ENCODE measurements at regions of chr2 and their contacts with region 1.

Region 1: DNA sequence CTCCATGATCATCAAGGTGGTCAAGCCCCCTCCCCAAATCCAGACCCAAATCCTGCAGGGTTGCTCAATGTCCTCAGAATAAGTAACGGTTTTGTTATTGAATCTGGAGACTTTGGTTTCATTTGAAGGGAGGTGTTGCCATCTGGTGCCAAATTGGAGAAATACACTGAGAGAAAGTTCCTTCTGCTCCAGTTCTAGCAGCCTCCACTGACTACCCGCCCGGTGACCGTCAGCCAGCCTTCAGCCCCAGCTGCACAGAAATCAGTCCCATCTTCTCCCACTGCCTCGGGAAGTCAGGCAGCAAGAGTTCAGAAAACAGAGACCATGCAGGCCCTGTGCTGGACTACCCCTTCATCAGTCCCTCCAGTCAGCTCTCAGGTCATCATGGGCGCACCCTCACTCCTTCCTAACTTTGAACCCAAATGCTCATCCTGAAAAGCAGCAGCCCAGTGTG is 38.7 kb downstream of the PKDCC start:
- DNase-seq: peak; percentile 35
- ATAC-seq: peak; percentile 77
- H3K4me3 ChIP-seq: no peak overlapping the region
- H3K27ac ChIP-seq: no peak overlapping the region
- H3K4me1 ChIP-seq: no peaks in the 10 kb centered on the region
- H3K27me3 ChIP-seq: peaks cover 4% of the 10 kb centered on the region; the same call in 1 of the 2 replicates
- CTCF ChIP-seq: peak; percentile 44 to 80 (median 73)
- POLR2A ChIP-seq: no peak
- RAD21 ChIP-seq: peak; percentile 93

Region 2: DNA sequence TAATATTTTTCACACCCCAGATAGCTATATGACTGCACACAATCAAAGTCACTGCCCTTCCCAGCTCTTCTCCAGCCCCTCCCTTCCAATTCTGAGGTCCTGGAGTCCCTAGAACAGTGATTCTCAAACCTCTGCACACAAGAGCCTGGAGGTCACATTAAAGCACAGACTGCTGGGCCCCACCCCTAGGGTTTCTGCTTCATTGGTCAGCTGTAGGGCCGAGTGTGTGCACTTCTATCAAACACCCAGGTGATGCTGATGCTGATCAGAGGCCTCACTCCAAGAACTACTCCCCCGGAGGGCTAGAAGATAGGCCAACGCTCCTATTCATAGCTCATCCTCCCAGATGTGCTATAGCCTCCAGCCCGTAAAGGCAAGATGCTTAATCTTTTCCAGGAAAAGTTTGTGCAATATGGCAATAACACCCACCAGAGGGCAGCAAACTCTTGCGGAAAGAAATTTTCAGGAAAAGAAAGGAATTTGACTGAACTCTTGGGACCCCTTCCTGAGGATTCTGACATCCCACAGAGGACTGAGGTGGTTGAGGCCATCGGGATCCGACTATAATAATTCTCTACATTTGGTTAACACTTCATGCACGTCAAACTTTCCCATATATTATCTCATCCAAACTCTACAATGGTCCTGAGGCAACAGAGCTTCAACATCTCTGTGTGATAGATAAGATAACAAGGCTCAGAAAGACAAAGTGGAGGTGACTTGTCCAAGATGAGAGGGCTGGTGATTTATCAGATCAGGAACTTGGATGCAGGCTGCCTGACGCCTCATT is 232.9 kb before region 1 on chr2:
- CTCF ChIA-PET with region 1: interaction called, 117 read pairs
- POLR2A ChIA-PET with region 1: interaction called, 6 read pairs
- RAD21 ChIA-PET with region 1: interaction called, 11 to 16 read pairs
- intact Hi-C with region 1: loop called (anchors 1 kb)
- DNase-seq: peak; percentile 35
- ATAC-seq: peak; percentile 82
- H3K4me3 ChIP-seq: no peak overlapping the region
- H3K27ac ChIP-seq: no peak overlapping the region
- H3K4me1 ChIP-seq: no peaks in the 10 kb centered on the region
- H3K27me3 ChIP-seq: peaks cover 12% of the 10 kb centered on the region
- CTCF ChIP-seq: peak; percentile 67 to 91 (median 80)
- POLR2A ChIP-seq: no peak
- RAD21 ChIP-seq: peak; percentile 94

Region 3: GRCh38 chr2:41933585-41934320 is 152.8 kb before region 1 on chr2:
- CTCF ChIA-PET with region 1: no interaction called
- POLR2A ChIA-PET with region 1: no interaction called
- RAD21 ChIA-PET with region 1: no interaction called
- intact Hi-C with region 1: no loop called
- DNase-seq: no peak
- ATAC-seq: no peak
- H3K4me3 ChIP-seq: no peak overlapping the region
- H3K27ac ChIP-seq: no peak overlapping the region
- H3K4me1 ChIP-seq: peaks cover 14 to 16% of the 10 kb centered on the region in 2 experiments
- H3K27me3 ChIP-seq: peaks cover 5% of the 10 kb centered on the region; the same call in 1 of the 2 replicates
- CTCF ChIP-seq: no peak
- POLR2A ChIP-seq: no peak
- RAD21 ChIP-seq: no peak

Region 4: DNA sequence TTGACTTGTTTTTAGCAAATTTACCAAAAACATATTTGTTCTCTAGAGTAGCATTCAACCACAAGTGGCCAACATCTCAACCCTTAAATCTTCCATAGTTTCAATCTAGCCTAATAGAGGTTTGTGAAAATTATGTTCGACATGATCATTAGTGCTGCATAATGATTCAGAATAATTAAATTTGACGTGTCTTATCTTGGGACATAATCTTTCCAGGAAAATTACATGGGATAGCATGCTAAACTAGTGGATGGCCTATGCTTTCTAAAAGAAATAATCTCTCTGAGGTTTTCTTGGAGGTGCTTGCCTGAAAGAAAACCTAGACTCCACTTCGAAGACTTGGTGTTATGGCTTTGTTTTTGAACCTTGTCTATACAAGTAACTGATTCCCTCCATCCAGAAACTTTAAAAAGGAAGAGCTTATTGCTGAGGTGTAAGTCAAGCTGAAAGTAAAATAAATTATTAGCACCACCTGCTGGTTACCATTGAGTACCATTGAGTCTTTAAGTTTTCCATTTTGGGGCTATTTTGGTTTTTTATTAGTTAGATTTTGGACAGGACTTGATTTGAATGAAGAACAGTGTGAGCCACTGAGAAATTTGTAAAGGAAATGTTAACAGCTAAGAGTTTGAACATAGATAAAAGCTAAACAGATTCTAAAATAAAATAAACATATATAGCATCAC is 241.8 kb after region 1 on chr2:
- CTCF ChIA-PET with region 1: interaction called, 11 read pairs
- POLR2A ChIA-PET with region 1: no interaction called
- RAD21 ChIA-PET with region 1: no interaction called
- intact Hi-C with region 1: no loop called
- DNase-seq: peak; percentile 7
- ATAC-seq: peak; percentile 65
- H3K4me3 ChIP-seq: no peak overlapping the region
- H3K27ac ChIP-seq: no peak overlapping the region
- H3K4me1 ChIP-seq: no peaks in the 10 kb centered on the region
- H3K27me3 ChIP-seq: no peaks in the 10 kb centered on the region
- CTCF ChIP-seq: peak; percentile 44 to 60 (median 60); a peak in 5 of 6 replicates
- POLR2A ChIP-seq: no peak
- RAD21 ChIP-seq: peak; percentile 63

Measured in HCT116 (cell line).